Sigmoid colon (tissue), 7 donors: ENCODE measurements at regions of chr5 and their contacts with region 1.

Region 1: GRCh38 chr5:172770675-172771438 is at the start of gene DUSP1:
- DNase-seq: peak; percentile 100
- H3K4me3 ChIP-seq: peak within 1 kb of the TSS; percentile 80 to 96 (median 86)
- H3K27ac ChIP-seq: peak within 1 kb of the TSS; percentile 97 to 100 (median 99)
- H3K4me1 ChIP-seq: peaks cover 0 to 70% (median 63%) of the 10 kb centered on the region in 4 donors
- H3K27me3 ChIP-seq: no peaks in the 10 kb centered on the region
- CTCF ChIP-seq: peak in 3 of 4 experiments; percentile 25 to 48 (median 25)
- EP300 ChIP-seq: peak in 2 of 4 donors; percentile 48 to 90
- POLR2A ChIP-seq: peak; percentile 100
- total RNA-seq, gene DUSP1: 449 to 1,033 (median 779) TPM

Region 2: DNA sequence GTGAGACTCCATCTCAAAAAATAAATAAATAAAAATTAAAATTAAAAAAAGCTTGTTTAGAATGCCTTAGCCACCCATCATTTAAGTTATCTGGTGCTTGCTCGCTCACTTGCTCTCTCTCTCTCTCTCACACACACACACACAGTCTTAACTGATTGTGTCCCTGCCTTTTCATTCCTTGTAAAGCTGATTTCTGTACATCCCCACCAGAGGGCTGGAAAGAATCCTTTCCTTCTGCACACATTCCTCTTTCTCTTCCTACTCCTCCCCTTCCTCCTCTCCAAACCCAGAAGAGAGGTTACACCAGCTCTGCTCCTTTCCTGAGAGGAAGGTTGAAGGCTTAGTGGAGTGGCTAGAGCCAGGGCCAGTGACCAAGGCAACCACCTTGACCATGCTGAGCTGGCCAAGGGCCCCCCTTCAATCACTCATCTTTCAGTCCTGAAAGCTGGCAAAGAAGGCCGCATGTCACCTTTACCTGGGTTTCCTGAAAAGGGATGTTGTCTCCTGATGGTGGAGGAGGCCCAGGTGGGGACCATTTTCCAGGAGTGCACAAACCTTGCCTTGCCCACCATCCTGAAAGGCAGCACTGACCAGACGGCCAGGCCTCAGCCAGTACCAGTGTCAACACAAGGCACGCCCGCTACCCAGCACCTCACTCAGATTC is 608.4 kb before region 1 on chr5:
- intact Hi-C with region 1: no loop called
- DNase-seq: no peak
- H3K4me3 ChIP-seq: no peak overlapping the region
- H3K27ac ChIP-seq: no peak overlapping the region
- H3K4me1 ChIP-seq: peaks cover 0 to 8% (median 3%) of the 10 kb centered on the region in 4 donors
- H3K27me3 ChIP-seq: no peaks in the 10 kb centered on the region
- CTCF ChIP-seq: no peak
- EP300 ChIP-seq: no peak
- POLR2A ChIP-seq: no peak

Region 3: DNA sequence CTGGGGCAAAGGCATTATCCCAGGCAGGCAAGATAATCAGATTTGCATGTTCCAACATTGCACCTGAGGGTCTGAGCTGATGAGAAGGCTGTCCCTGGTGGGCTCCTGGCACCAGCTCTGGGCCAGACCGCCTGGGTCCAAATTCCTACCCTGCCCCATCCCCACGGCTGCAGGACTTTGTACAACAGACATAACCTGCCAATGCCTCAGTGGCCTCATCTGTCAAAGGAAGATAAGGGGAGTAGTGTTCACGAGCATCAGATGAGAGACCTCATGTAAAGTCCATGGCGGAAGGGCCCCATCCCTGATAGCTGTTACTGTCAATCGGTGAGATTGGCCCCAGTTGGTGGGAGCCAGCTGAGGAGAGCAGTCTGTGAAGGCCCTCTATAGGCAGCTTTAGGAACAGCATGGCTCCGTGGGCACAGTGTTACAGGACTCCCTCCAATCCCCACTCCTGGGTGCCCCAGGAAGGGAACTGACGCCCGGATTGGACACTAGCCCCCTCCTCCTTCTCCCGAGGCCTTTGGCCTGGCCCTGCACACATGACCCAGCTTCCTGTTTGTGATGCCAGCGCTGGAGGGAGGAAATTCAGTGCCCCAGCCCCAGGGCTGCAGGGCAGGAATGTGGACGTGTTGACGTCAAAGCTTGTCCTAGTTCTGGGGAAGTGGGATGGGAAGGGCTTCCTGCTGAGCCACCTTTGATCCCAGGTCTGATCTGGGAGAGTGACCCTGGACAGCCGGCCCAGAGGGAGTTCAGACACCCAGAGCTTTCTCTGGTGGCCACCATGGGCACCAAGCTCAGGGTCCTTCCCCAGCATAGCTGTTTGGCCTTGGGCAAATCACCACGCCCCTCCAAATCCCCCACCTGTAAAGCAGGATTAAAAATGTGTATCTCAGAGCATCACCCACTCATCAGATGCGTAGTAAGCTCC is 56.1 kb before region 1 on chr5:
- intact Hi-C with region 1: loop called (anchors 1 kb)
- DNase-seq: peak; percentile 92
- H3K4me3 ChIP-seq: no peak overlapping the region
- H3K27ac ChIP-seq: peak overlapping the region; percentile 52 to 77 (median 64)
- H3K4me1 ChIP-seq: peaks cover 0 to 40% (median 20%) of the 10 kb centered on the region in 4 donors
- H3K27me3 ChIP-seq: peaks cover 0 to 5% (median 0%) of the 10 kb centered on the region in 3 donors
- CTCF ChIP-seq: peak; percentile 59 to 85 (median 84)
- EP300 ChIP-seq: peak in 2 of 4 donors; percentile 72 to 74
- POLR2A ChIP-seq: no peak

Region 4: GRCh38 chr5:172860520-172861443 is 89.9 kb after region 1 on chr5:
- intact Hi-C with region 1: loop called (anchors 2 kb)
- DNase-seq: peak; percentile 97
- H3K4me3 ChIP-seq: peak overlapping the region in 2 of 4 donors; percentile 9 to 11
- H3K27ac ChIP-seq: peak overlapping the region; percentile 81 to 95 (median 90)
- H3K4me1 ChIP-seq: peaks cover 0 to 74% (median 59%) of the 10 kb centered on the region in 4 donors
- H3K27me3 ChIP-seq: no peaks in the 10 kb centered on the region
- CTCF ChIP-seq: no peak
- EP300 ChIP-seq: peak in 2 of 4 donors; percentile 28 to 77
- POLR2A ChIP-seq: peak in 1 of 2 donors; percentile 2

Region 5: GRCh38 chr5:172868924-172869591 is 98.2 kb after region 1 on chr5:
- intact Hi-C with region 1: loop called (anchors 1 kb)
- DNase-seq: peak; percentile 98
- H3K4me3 ChIP-seq: no peak overlapping the region
- H3K27ac ChIP-seq: peak overlapping the region; percentile 85 to 98 (median 94)
- H3K4me1 ChIP-seq: peaks cover 0 to 90% (median 85%) of the 10 kb centered on the region in 4 donors
- H3K27me3 ChIP-seq: no peaks in the 10 kb centered on the region
- CTCF ChIP-seq: peak in 1 of 4 experiments; percentile 28
- EP300 ChIP-seq: peak; percentile 96 to 100 (median 98)
- POLR2A ChIP-seq: peak in 1 of 2 donors; percentile 9

Region 6: DNA sequence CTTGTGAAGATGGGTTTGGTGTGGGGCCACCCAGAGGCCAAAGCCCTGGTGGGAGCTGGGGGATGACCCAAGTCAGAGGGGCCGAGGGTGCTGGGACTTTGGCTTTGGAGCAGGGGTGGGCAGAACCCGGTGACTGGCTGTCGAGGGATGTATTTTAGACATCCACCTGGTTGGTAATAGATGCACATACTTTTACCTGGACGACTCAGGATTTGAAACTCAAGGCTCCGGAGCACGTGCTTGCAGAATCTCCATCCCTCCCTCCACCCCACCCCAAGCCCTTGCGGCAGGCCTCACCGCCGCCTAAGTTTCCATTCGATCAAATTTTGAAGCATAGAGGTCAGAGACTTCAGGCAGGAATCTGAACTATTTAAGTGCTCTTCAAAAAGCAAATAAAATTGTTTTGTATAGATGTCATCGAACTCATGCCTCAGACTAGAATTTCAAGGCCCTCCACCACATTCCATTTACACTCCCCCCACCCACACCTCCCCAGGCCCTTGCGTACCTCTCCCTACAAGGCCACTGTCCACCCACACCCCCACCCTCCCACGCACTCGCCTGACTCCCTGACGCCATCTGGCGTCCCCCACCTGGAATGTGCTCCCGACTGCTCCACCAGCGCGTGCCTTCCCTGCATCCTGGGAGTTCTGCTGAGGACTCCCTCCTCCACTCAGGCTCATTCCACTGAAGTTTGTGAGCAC is 131.8 kb after region 1 on chr5:
- intact Hi-C with region 1: loop called (anchors 1 kb)
- DNase-seq: peak; percentile 97
- H3K4me3 ChIP-seq: no peak overlapping the region
- H3K27ac ChIP-seq: peak overlapping the region; percentile 87 to 96 (median 90)
- H3K4me1 ChIP-seq: peaks cover 0 to 85% (median 84%) of the 10 kb centered on the region in 4 donors
- H3K27me3 ChIP-seq: no peaks in the 10 kb centered on the region
- CTCF ChIP-seq: peak in 2 of 4 experiments; percentile 15 to 59
- EP300 ChIP-seq: peak; percentile 43 to 100 (median 86)
- POLR2A ChIP-seq: no peak

Region 7: GRCh38 chr5:172920447-172920849 is 149.6 kb after region 1 on chr5:
- intact Hi-C with region 1: loop called (anchors 5 kb)
- DNase-seq: peak; percentile 91
- H3K4me3 ChIP-seq: no peak overlapping the region
- H3K27ac ChIP-seq: peak overlapping the region; percentile 73 to 89 (median 80)
- H3K4me1 ChIP-seq: peaks cover 0 to 23% (median 18%) of the 10 kb centered on the region in 4 donors
- H3K27me3 ChIP-seq: no peaks in the 10 kb centered on the region
- CTCF ChIP-seq: no peak
- EP300 ChIP-seq: peak; percentile 91 to 100 (median 98)
- POLR2A ChIP-seq: no peak